MCF 10A (cell line): ENCODE measurements at regions of chr20 and their contacts with region 1.

Region 1: GRCh38 chr20:2237059-2237458 is 58.7 kb upstream of the TGM3 start:
- DNase-seq: peak; percentile 89
- H3K4me3 Mint-ChIP-seq: no peak overlapping the region
- H3K27ac Mint-ChIP-seq: no peak overlapping the region
- H3K4me1 Mint-ChIP-seq: peaks cover 17% of the 10 kb centered on the region
- H3K27me3 Mint-ChIP-seq: peaks cover 42% of the 10 kb centered on the region
- CTCF ChIP-seq: peak; percentile 13

Region 2: DNA sequence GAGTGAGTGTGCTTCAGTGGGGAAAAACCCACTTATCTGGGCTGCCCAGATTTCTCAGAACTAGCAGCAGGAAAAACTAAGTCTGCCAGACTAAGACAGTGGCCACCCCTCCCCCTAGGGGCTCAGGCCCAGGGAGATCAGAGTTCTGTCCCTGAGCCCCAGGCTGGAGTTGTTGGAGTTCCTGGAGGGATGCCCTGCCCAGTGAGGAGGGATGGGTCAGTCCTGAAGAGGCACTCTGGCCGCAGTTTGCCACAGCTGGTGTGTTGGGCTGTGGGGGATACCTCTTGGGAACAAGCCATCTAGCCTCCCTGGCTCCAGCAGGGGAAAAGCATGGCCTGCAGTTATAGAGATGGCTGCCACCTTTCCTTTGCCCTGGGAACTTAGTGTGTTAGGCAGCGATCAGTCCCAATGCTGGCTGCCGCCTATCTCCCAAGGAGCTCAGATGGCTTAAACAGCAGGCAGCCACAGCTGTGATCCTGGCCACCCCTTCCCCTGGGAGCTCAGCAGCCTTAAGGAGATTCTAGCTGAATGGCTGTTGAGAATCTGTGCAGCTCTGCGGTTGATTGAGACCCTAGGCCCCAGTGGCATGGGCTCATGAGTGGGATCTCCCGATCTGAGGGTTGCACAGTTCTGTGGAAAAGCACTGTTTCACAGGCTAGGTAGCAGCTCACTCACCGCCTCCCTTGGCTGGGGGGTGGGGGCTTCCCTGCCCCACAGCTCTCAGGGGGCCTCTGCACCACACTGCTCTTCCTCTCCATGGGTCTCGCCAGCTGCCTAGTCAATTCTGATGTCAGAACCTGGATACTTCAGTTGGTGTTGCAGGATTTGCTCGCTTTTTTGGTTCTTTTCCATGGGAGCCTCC is 592.7 kb before region 1 on chr20:
- CTCF ChIA-PET with region 1: no interaction called
- POLR2A ChIA-PET with region 1: no interaction called
- intact Hi-C with region 1: no loop called
- DNase-seq: no peak
- H3K4me3 Mint-ChIP-seq: no peak overlapping the region
- H3K27ac Mint-ChIP-seq: no peak overlapping the region
- H3K4me1 Mint-ChIP-seq: no peaks in the 10 kb centered on the region
- H3K27me3 Mint-ChIP-seq: no peaks in the 10 kb centered on the region
- CTCF ChIP-seq: no peak

Region 3: DNA sequence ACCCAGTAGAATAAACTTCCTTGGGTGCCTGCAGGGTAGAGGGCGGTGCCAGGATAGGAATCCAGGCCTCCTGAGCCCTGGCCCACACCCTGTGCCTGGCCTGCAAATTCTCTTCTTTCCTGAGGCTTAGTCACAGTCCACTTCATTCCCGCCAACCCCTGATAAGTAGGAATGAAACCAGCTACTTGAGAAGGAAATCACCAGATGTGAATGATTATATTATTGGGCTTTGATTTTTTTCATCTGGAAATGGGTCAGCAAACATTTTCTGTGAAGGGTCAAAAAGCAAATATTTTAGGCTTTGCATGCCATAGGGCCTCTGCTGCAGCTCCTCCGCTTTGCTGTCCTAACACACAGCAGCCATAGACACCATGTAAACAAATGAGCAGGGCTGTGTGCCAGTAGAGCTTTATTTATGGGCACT is 85.2 kb before region 1 on chr20:
- CTCF ChIA-PET with region 1: no interaction called
- POLR2A ChIA-PET with region 1: no interaction called
- intact Hi-C with region 1: no loop called
- DNase-seq: peak; percentile 64
- H3K4me3 Mint-ChIP-seq: no peak overlapping the region
- H3K27ac Mint-ChIP-seq: peak overlapping the region; percentile 92
- H3K4me1 Mint-ChIP-seq: peaks cover 31% of the 10 kb centered on the region
- H3K27me3 Mint-ChIP-seq: no peaks in the 10 kb centered on the region
- CTCF ChIP-seq: no peak

Region 4: DNA sequence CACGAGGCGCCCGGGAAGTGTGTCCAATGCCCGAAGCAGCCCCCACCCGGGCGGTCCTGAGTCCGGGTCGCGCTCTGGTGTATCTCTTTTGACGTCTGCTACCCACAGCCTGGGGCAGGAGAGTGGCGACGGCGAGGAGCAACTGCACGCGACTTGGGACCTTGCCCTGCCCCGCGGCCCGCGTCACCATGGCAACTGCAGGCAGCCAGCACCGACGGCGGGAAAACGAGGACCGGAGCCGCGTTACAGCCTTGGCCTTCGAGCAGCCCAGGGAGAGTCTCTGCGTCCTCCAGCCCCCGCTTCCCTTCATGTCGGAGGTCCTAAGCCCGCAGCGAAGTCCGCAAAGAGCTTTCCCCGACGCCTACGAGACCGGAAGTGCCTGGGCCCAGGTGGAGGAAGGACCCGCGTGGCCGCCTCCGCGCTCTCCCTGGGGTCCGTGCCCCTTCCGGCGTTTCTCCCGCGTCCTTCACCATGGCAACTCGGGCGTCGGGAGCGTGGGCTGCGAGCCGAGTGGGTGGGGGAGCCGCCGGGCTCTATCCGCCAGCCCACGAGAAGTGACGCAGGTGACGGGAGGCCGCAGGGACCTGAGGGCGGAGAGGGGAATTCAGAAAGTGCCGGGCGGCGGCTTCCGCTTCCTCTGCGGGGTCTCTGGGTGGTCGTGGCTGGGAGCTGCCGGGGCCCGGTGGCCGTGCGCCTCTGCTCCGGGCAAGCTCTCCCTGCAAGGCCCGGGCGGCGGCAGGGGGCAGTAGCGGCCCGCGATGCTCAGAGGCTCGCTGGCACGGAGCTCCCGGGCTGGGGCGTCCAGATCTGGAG is 29.9 kb before region 1 on chr20:
- CTCF ChIA-PET with region 1: interaction called, 36 read pairs
- POLR2A ChIA-PET with region 1: interaction called, 15 read pairs
- intact Hi-C with region 1: no loop called
- DNase-seq: peak; percentile 64
- H3K4me3 Mint-ChIP-seq: peak overlapping the region; percentile 65
- H3K27ac Mint-ChIP-seq: no peak overlapping the region
- H3K4me1 Mint-ChIP-seq: no peaks in the 10 kb centered on the region
- H3K27me3 Mint-ChIP-seq: peaks cover 8% of the 10 kb centered on the region
- CTCF ChIP-seq: peak; percentile 93

Region 5: DNA sequence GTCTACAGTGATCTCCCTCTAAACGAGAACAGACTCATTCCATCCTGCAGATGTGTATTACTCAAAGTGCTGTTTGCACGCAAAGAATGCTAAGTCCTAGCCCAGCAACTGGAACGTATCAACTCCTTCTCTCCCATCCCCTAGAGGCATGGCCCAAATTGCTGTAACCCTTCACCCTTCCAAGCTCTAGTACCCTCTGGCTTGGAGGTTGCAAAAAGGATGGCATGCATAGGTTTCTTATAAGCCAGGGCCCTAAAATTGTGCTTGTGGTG is 12.8 kb before region 1 on chr20:
- CTCF ChIA-PET with region 1: interaction called, 19 read pairs
- POLR2A ChIA-PET with region 1: interaction called, 5 read pairs
- intact Hi-C with region 1: no loop called
- DNase-seq: no peak
- H3K4me3 Mint-ChIP-seq: no peak overlapping the region
- H3K27ac Mint-ChIP-seq: no peak overlapping the region
- H3K4me1 Mint-ChIP-seq: no peaks in the 10 kb centered on the region
- H3K27me3 Mint-ChIP-seq: peaks cover 2% of the 10 kb centered on the region
- CTCF ChIP-seq: no peak

Region 6: DNA sequence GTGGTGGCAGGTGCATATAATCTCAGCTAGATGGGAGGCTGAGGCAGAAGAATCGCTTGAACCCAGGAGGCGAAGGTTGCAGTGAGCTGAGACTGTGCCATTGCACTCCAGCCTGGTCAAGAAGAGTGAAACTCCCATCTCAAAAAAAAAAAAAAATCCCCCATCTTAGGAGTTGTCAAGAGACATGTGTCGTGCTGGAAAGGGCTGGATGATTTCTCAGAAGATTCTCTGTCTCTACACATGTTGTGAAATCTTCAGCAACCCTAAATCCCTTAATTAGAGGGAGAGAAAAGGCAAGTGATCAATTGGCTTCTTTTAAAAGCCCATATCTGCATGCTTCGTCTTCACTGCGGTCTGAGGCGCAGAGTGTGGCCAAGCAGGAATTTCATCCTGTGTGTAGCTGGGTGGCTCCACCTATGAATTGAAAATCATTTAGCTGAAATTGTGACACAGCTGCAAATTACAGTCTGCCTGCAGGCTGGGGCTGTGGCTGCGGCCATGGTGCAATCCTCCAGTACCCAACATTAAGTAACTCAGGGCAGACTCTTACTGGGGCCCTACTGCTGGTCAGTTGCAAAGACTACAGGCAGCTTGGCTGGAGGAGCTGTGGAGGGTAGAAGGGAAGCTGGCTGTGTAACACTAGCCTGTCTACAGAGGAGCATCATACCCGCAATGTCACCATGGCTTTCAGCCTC is 55.5 kb after region 1 on chr20:
- CTCF ChIA-PET with region 1: interaction called, 26 read pairs
- POLR2A ChIA-PET with region 1: interaction called, 10 read pairs
- intact Hi-C with region 1: no loop called
- DNase-seq: peak; percentile 51
- H3K4me3 Mint-ChIP-seq: no peak overlapping the region
- H3K27ac Mint-ChIP-seq: no peak overlapping the region
- H3K4me1 Mint-ChIP-seq: peaks cover 7% of the 10 kb centered on the region
- H3K27me3 Mint-ChIP-seq: no peaks in the 10 kb centered on the region
- CTCF ChIP-seq: no peak

Region 7: GRCh38 chr20:2314759-2315439 is 77.8 kb after region 1 on chr20:
- CTCF ChIA-PET with region 1: interaction called, 15 read pairs
- POLR2A ChIA-PET with region 1: interaction called, 10 read pairs
- intact Hi-C with region 1: no loop called
- DNase-seq: peak; percentile 95
- H3K4me3 Mint-ChIP-seq: peak overlapping the region; percentile 1
- H3K27ac Mint-ChIP-seq: peak overlapping the region; percentile 20
- H3K4me1 Mint-ChIP-seq: peaks cover 20% of the 10 kb centered on the region
- H3K27me3 Mint-ChIP-seq: no peaks in the 10 kb centered on the region
- CTCF ChIP-seq: no peak

Region 8: GRCh38 chr20:2349818-2350508 is 112.9 kb after region 1 on chr20:
- CTCF ChIA-PET with region 1: interaction called, 7 read pairs
- POLR2A ChIA-PET with region 1: no interaction called
- intact Hi-C with region 1: loop called (anchors 10 kb)
- DNase-seq: no peak
- H3K4me3 Mint-ChIP-seq: no peak overlapping the region
- H3K27ac Mint-ChIP-seq: no peak overlapping the region
- H3K4me1 Mint-ChIP-seq: no peaks in the 10 kb centered on the region
- H3K27me3 Mint-ChIP-seq: no peaks in the 10 kb centered on the region
- CTCF ChIP-seq: no peak

Region 9: GRCh38 chr20:2451939-2452732 is 215.1 kb after region 1 on chr20:
- CTCF ChIA-PET with region 1: interaction called, 34 read pairs
- POLR2A ChIA-PET with region 1: interaction called, 15 read pairs
- intact Hi-C with region 1: no loop called
- DNase-seq: peak; percentile 81
- H3K4me3 Mint-ChIP-seq: no peak overlapping the region
- H3K27ac Mint-ChIP-seq: no peak overlapping the region
- H3K4me1 Mint-ChIP-seq: peaks cover 31% of the 10 kb centered on the region
- H3K27me3 Mint-ChIP-seq: no peaks in the 10 kb centered on the region
- CTCF ChIP-seq: peak; percentile 70